ENCODE measurements at regions of chr9 and their contacts with region 1.

Region 1: DNA sequence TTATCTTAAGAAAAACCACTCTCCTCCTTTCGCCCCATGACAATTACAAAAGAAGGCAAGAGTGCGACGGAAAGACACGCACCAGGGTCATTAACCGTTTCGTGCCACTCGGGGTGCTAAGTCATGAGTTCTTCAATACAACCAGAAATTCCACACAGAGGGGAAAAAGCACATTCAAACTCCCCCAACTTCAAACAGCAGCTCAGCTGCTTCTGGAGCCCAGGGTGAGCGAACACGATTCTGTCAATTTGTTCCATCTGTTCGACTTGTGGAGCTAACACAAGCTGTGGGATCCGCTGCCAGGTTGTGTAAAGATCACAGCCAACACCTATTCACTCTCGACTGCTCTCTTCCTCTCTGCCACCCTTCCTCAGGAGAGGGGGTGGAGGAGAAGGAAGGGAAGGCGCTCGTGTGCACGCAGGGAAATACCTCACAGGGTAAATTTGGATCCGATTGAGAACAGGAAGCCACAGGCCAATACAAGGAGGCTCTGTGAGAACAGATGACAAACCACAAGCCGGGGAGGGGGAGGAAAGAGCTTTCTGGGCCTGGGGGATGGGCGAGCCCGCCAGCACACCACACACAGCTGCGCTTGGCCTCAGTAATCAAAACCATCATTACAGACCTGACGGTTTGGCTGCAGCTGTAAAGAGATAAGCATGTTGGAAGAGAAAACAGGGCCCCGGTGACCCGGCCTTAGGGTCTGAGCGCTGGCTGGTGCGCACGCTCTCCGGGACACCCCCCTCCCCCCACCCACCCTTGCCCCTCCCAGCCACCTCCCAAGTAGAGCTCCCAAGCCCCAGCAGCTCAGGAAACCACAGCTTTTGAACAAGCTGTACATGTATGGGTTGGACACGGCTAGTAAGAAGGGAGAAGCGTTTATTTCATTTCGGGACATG is 54.3 kb downstream of the PTCH1 start:
- DNase-seq: peak; percentile 64 to 69
- H3K4me3 ChIP-seq: peak overlapping the region in 1 of 3 donors; percentile 13
- H3K27ac ChIP-seq: peak overlapping the region; percentile 15 to 28 (median 17)
- H3K4me1 ChIP-seq: peaks cover 0 to 14% of the 10 kb centered on the region in 2 donors
- H3K27me3 ChIP-seq: no peaks in the 10 kb centered on the region
- CTCF ChIP-seq: no peak
- POLR2A ChIP-seq: no peak

Region 2: DNA sequence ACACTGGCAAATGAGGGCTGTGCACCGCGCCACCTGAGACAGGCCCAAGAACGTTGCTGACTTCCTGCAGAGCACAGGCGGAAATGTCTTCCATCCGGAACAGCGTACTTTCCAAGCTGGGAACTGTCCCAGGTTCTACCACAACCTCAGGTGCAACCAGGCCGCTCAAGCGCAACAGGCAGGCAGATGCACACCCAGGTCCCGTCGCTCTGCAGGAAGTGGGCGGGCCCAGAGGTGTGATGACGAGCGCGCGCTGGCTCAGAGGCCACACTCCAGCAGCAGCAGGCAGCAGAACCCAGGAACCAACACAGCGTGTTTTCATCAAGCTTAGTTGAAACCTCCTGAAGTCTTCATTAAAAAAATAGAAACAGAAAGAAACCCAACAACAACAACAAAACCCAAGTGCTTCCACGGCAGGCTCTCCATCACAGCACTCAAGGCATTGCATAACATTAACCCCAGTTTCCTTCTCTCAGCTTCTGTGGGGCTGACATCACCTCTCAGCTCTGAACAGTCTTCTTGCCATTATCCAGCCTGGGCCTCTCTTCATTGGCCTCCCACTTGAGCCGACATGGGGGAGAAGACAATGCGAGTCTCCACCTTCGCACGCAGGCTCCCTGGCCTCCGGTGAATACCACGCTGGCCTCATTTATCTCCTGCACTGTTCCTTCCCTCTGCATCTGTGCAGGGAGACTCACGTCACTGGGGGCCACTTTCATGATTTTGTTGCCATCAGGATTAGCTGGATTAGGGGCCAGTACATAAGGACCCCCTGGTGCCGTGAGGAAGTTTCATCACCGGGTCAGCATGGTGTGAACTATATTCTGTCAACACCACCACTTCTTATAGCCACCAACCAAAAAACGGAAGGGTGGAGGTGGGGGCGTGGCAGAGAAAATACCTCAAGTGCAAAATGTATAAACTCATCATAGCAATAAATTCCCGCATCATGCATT is 32.2 kb after region 1 on chr9:
- intact Hi-C with region 1: loop called (anchors 5 kb)
- DNase-seq: peak; percentile 93 to 95
- H3K4me3 ChIP-seq: no peak overlapping the region
- H3K27ac ChIP-seq: peak overlapping the region; percentile 36 to 64 (median 59)
- H3K4me1 ChIP-seq: peaks cover 16 to 31% of the 10 kb centered on the region in 2 donors
- H3K27me3 ChIP-seq: no peaks in the 10 kb centered on the region
- CTCF ChIP-seq: no peak
- POLR2A ChIP-seq: peak in 1 of 2 donors; percentile 51